Naive thymus-derived CD8-positive, alpha-beta T cell (primary cell): ENCODE measurements at regions of chr13 and their contacts with region 1.

Region 1: DNA sequence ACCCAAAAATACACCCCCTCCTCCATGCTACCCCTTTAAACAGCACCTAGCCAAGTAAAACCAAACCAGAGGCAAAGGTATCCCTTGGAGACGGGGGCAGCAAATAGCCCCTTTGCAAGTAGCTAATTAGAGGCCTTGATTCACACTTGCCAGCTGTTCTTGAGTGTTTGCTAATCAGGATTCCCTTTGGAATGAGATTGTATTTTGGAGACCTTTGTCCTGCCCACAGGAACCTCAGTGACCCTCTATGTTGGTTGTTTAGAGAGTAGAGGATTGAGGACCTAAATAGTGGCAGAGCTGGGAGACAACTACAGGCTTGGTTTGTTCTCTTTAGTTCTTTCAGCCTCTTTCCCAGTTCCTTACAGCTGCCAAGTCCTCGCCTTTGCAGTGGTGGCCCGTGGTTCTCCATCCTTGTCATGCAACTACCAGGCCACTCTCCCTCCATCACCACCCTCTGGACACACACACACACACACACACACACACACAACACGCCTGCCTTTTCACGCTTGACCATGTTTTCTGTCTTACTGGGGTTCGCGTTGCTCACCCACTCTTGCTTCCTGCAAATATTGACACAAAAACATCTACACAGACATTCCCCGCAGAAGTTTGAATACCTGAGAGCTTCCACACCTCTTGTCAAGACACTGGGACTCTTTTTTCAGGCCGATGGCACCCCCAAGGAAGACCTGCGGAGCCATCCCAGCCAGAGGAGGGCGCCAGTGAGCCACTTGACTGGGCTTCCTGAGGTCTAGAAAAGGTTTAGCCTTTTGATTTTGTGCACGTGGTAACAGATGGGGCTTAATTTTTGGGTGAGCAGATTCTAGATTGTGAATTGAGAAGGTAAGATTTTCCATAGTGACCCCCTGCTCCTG is 80.0 kb upstream of the GPR183 start:
- DNase-seq: peak; percentile 73 to 91 (median 87)
- ATAC-seq: peak; percentile 15 to 20
- H3K4me3 Mint-ChIP-seq: peak overlapping the region in 9 of 10 donors; percentile 29 to 83 (median 57)
- H3K27ac Mint-ChIP-seq: peak overlapping the region; percentile 96 to 100 (median 98)
- H3K4me1 Mint-ChIP-seq: peaks cover 33 to 74% (median 67%) of the 10 kb centered on the region in 4 donors
- H3K27me3 Mint-ChIP-seq: no peaks in the 10 kb centered on the region

Region 2: GRCh38 chr13:99374994-99375737 is 12.0 kb before region 1 on chr13:
- POLR2A ChIA-PET with region 1: interaction called, 98 read pairs
- DNase-seq: peak; percentile 57 to 96 (median 86)
- ATAC-seq: peak; percentile 81 to 93
- H3K4me3 Mint-ChIP-seq: peak overlapping the region; percentile 55 to 86 (median 76)
- H3K27ac Mint-ChIP-seq: peak overlapping the region; percentile 96 to 100 (median 99)
- H3K4me1 Mint-ChIP-seq: peaks cover 55 to 97% (median 86%) of the 10 kb centered on the region in 4 donors
- H3K27me3 Mint-ChIP-seq: no peaks in the 10 kb centered on the region